ENCODE measurements at regions of chr11 and their contacts with region 1.

Region 1: DNA sequence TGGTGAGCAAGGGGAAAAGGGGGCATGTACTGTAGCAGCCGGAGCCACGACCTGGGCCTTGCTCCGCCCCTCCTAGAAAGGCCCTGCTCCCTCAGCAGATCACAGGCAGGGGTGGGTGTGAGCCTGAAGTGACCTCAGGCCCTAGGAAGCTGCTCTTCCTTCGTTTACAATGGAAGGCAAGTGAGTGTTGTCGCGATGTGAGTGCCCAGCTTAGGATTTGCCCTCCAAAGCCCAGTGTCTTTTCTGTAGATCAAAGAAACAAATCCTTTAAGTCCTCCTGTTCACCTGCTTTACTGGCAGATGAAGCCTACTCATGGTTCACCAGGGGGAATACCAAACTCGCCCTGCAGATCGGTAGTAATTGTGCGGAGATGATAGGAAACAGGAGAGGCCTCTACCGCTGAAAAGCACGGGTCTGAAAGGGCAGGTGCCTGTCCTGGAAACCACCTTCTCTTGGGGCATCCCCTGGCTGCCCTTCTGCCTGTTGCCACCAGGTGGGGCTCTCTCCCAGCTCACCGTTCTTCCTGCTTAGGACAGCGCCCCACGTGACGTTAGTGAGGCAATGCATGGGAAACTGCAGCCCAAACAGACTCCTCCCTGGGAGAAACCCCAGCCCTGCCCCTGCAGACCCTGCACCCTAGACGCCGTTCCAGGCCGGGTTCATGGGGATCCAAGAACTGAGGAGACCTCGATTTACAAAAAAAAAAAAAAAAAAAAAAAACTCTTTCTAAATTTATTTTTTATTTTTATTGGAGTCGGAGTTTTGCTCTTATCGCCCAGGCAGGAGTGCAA is 45.9 kb upstream of the RAB1B start:
- DNase-seq: peak; percentile 91
- H3K4me3 ChIP-seq: no peak overlapping the region; a peak in 1 of 4 replicates
- H3K27ac ChIP-seq: no peak overlapping the region
- H3K4me1 ChIP-seq: peaks cover 0 to 6% of the 10 kb centered on the region in 2 experiments; a peak in 1 of 4 replicates
- H3K27me3 ChIP-seq: no peaks in the 10 kb centered on the region
- CTCF ChIP-seq: peak; percentile 98
- EP300 ChIP-seq: no peak
- RAD21 ChIP-seq: peak; percentile 91

Region 2: DNA sequence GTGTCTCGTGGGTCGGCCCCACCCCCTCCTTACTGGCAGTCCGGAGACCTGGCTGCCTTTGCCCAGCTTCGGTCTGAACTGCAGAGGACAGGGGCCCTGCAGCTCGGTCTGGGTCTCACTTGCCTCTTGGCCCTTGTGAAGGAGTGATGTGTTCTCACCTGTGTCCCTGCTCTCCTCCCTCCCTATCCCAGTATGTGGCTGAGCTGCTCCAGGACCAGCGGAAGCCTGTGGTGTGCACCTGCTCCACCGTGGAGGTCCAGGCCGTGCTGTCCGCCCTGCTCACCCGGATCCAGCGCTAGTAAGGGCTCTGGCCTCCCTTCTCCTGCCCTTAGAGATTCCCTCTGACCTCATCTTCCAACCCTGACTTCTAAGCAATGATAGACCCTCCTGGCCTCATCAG is 10.2 kb after region 1 on chr11:
- CTCF ChIA-PET with region 1: interaction called, 34 read pairs
- POLR2A ChIA-PET with region 1: interaction called, 3 read pairs
- DNase-seq: no peak
- H3K4me3 ChIP-seq: no peak overlapping the region
- H3K27ac ChIP-seq: no peak overlapping the region
- H3K4me1 ChIP-seq: no peaks in the 10 kb centered on the region
- H3K27me3 ChIP-seq: no peaks in the 10 kb centered on the region
- CTCF ChIP-seq: no peak
- EP300 ChIP-seq: no peak
- RAD21 ChIP-seq: no peak

Region 3: GRCh38 chr11:66251809-66252208 is 29.3 kb after region 1 on chr11:
- CTCF ChIA-PET with region 1: interaction called, 15 read pairs
- POLR2A ChIA-PET with region 1: no interaction called
- DNase-seq: no peak
- H3K4me3 ChIP-seq: no peak overlapping the region
- H3K27ac ChIP-seq: no peak overlapping the region
- H3K4me1 ChIP-seq: peaks cover 0 to 7% of the 10 kb centered on the region in 2 experiments; a peak in 1 of 4 replicates
- H3K27me3 ChIP-seq: no peaks in the 10 kb centered on the region
- CTCF ChIP-seq: no peak
- EP300 ChIP-seq: no peak
- RAD21 ChIP-seq: no peak

Region 4: GRCh38 chr11:66282468-66283386 is 60.2 kb after region 1 on chr11:
- CTCF ChIA-PET with region 1: interaction called, 73 read pairs
- POLR2A ChIA-PET with region 1: no interaction called
- DNase-seq: peak; percentile 98
- H3K4me3 ChIP-seq: peak overlapping the region in 1 of 2 experiments; percentile 48; a peak in 2 of 4 replicates
- H3K27ac ChIP-seq: peak overlapping the region; percentile 47 to 57; a peak in 3 of 4 replicates
- H3K4me1 ChIP-seq: peaks cover 0 to 55% of the 10 kb centered on the region in 2 experiments; a peak in 1 of 4 replicates
- H3K27me3 ChIP-seq: no peaks in the 10 kb centered on the region
- CTCF ChIP-seq: peak; percentile 95
- EP300 ChIP-seq: no peak
- RAD21 ChIP-seq: peak; percentile 66

Region 5: GRCh38 chr11:66336234-66337102 is 113.9 kb after region 1 on chr11 and contains the start of gene RIN1:
- CTCF ChIA-PET with region 1: interaction called, 14 read pairs
- POLR2A ChIA-PET with region 1: no interaction called
- DNase-seq: peak; percentile 94
- H3K4me3 ChIP-seq: peak within 1 kb of the TSS; percentile 68 to 69
- H3K27ac ChIP-seq: peak within 1 kb of the TSS; percentile 94
- H3K4me1 ChIP-seq: peaks cover 27 to 44% of the 10 kb centered on the region in 2 experiments
- H3K27me3 ChIP-seq: no peaks in the 10 kb centered on the region
- CTCF ChIP-seq: peak; percentile 56
- EP300 ChIP-seq: peak; percentile 47 to 78; a peak in 3 of 4 replicates
- RAD21 ChIP-seq: peak; percentile 81
- polyA plus RNA-seq, gene RIN1: 13.0 and 16.9 TPM in 2 replicates

Measured in SK-N-SH (cell line).